GM12878 (cell line): ENCODE measurements at regions of chr3 and their contacts with region 1.

Region 1: GRCh38 chr3:55721716-55722484 is 234.8 kb upstream of the WNT5A start:
- DNase-seq: no peak
- ATAC-seq: peak; percentile 66
- H3K4me3 ChIP-seq: no peak overlapping the region
- H3K27ac ChIP-seq: no peak overlapping the region
- H3K4me1 ChIP-seq: peaks cover 37% of the 10 kb centered on the region
- H3K27me3 ChIP-seq: 0 out of 4 replicates have a peak, but pooled peaks cover 0 to 1% of the 10 kb centered on the region in 2 experiments
- CTCF ChIP-seq: peak; percentile 57 to 71 (median 65)
- EP300 ChIP-seq: no peak
- POLR2A ChIP-seq: no peak
- RAD21 ChIP-seq: peak; percentile 69

Region 2: GRCh38 chr3:54853573-54854404 is 868.1 kb before region 1 on chr3:
- CTCF ChIA-PET with region 1: no interaction called
- POLR2A ChIA-PET with region 1: no interaction called
- RAD21 ChIA-PET with region 1: no interaction called
- SMC1A ChIA-PET with region 1: no interaction called
- in situ Hi-C with region 1: loop called (anchors 10 kb)
- intact Hi-C with region 1: loop called (anchors 10 kb)
- DNase-seq: no peak
- ATAC-seq: peak; percentile 98
- H3K4me3 ChIP-seq: no peak overlapping the region
- H3K27ac ChIP-seq: no peak overlapping the region
- H3K4me1 ChIP-seq: no peaks in the 10 kb centered on the region
- H3K27me3 ChIP-seq: no peaks in the 10 kb centered on the region
- CTCF ChIP-seq: peak; percentile 76 to 90 (median 81)
- EP300 ChIP-seq: no peak
- POLR2A ChIP-seq: no peak
- RAD21 ChIP-seq: peak; percentile 77

Region 3: DNA sequence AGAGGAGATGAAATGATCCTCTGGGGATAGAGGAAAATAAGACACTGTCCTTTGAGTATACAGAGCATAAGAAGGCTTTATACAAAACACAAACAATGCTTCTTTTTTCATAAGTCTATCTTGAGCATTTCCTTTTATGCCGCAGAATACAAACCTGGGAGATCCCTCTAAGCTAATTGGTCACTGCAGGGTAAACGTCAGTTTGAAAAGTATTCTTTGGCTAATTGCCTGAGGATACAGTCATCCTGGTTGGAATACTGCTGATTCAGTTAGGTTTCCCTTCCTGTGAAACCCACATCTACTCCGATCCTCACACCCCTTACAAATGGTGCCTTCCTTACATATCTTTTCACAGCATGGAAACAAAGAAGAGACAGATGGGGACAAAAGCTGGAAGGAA is 245.4 kb before region 1 on chr3:
- CTCF ChIA-PET with region 1: interaction called, 11 read pairs
- POLR2A ChIA-PET with region 1: no interaction called
- RAD21 ChIA-PET with region 1: no interaction called
- SMC1A ChIA-PET with region 1: interaction called, 8 read pairs
- in situ Hi-C with region 1: loop called (anchors 5 kb)
- intact Hi-C with region 1: no loop called
- DNase-seq: no peak
- ATAC-seq: no peak
- H3K4me3 ChIP-seq: no peak overlapping the region
- H3K27ac ChIP-seq: no peak overlapping the region
- H3K4me1 ChIP-seq: no peaks in the 10 kb centered on the region
- H3K27me3 ChIP-seq: peaks cover 0 to 3% of the 10 kb centered on the region in 2 experiments; a peak in 1 of 4 replicates
- CTCF ChIP-seq: no peak
- EP300 ChIP-seq: no peak
- POLR2A ChIP-seq: no peak
- RAD21 ChIP-seq: no peak

Region 4: GRCh38 chr3:55505776-55506175 is 216.1 kb before region 1 on chr3:
- CTCF ChIA-PET with region 1: interaction called, 19 read pairs
- POLR2A ChIA-PET with region 1: no interaction called
- RAD21 ChIA-PET with region 1: interaction called, 3 read pairs
- SMC1A ChIA-PET with region 1: interaction called, 9 read pairs
- in situ Hi-C with region 1: no loop called
- intact Hi-C with region 1: loop called (anchors 5 kb)
- DNase-seq: no peak
- ATAC-seq: no peak
- H3K4me3 ChIP-seq: no peak overlapping the region
- H3K27ac ChIP-seq: no peak overlapping the region
- H3K4me1 ChIP-seq: no peaks in the 10 kb centered on the region
- H3K27me3 ChIP-seq: no peaks in the 10 kb centered on the region
- CTCF ChIP-seq: no peak
- EP300 ChIP-seq: no peak
- POLR2A ChIP-seq: no peak
- RAD21 ChIP-seq: no peak

Region 5: DNA sequence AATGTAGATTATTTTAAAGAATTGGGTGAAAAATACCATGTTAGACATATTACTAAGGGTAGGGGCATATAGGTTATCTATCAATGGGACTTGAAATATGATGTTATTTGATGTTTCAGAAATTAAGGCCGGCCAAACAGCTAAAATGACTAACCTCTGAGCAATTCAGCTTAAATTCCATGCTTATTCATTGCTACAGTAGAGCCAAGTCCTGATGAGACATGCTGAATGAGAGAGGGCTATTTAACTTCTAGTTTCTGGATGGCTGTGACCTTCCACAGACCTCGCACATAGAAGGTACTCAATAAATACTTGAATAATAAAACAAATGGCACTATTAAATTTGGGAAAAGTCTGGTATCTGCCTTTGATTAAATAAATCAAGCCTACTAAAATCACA is 59.2 kb before region 1 on chr3:
- CTCF ChIA-PET with region 1: interaction called, 6 read pairs
- POLR2A ChIA-PET with region 1: no interaction called
- RAD21 ChIA-PET with region 1: interaction called, 7 read pairs
- SMC1A ChIA-PET with region 1: interaction called, 11 read pairs
- in situ Hi-C with region 1: no loop called
- intact Hi-C with region 1: no loop called
- DNase-seq: no peak
- ATAC-seq: no peak
- H3K4me3 ChIP-seq: no peak overlapping the region
- H3K27ac ChIP-seq: no peak overlapping the region
- H3K4me1 ChIP-seq: peaks cover 35% of the 10 kb centered on the region
- H3K27me3 ChIP-seq: no peaks in the 10 kb centered on the region
- CTCF ChIP-seq: no peak
- EP300 ChIP-seq: no peak
- POLR2A ChIP-seq: no peak
- RAD21 ChIP-seq: no peak

Region 6: GRCh38 chr3:55690726-55691125 is 31.2 kb before region 1 on chr3:
- CTCF ChIA-PET with region 1: interaction called, 4 read pairs
- POLR2A ChIA-PET with region 1: interaction called, 3 read pairs
- RAD21 ChIA-PET with region 1: interaction called, 7 read pairs
- SMC1A ChIA-PET with region 1: interaction called, 14 read pairs
- in situ Hi-C with region 1: no loop called
- intact Hi-C with region 1: no loop called
- DNase-seq: peak; percentile 42
- ATAC-seq: peak; percentile 83
- H3K4me3 ChIP-seq: 0 out of 2 replicates have a peak overlapping the region, but pooled peaks have one; percentile 3
- H3K27ac ChIP-seq: no peak overlapping the region
- H3K4me1 ChIP-seq: peaks cover 46% of the 10 kb centered on the region
- H3K27me3 ChIP-seq: no peaks in the 10 kb centered on the region
- CTCF ChIP-seq: no peak
- EP300 ChIP-seq: no peak
- POLR2A ChIP-seq: no peak
- RAD21 ChIP-seq: no peak